Gastrocnemius medialis (tissue), 4 donors: ENCODE measurements at regions of chr13 and their contacts with region 1.

Region 1: GRCh38 chr13:48037346-48038173 is at the start of gene NUDT15:
- DNase-seq: peak; percentile 85 to 90
- ATAC-seq: peak; percentile 99
- H3K4me3 ChIP-seq: peak within 1 kb of the TSS; percentile 73 to 92 (median 86)
- H3K27ac ChIP-seq: peak within 1 kb of the TSS; percentile 93 to 99 (median 97)
- H3K4me1 ChIP-seq: peaks cover 6 to 16% of the 10 kb centered on the region in 2 donors
- H3K27me3 ChIP-seq: no peaks in the 10 kb centered on the region
- CTCF ChIP-seq: peak; percentile 96 to 98 (median 97)
- POLR2A ChIP-seq: peak; percentile 76 to 82
- total RNA-seq, gene NUDT15: 7.1 to 13.9 (median 10.7) TPM

Region 2: GRCh38 chr13:47673000-47673915 is 364.3 kb before region 1 on chr13:
- in situ Hi-C with region 1: no loop called
- intact Hi-C with region 1: no loop called
- DNase-seq: peak; percentile 2 to 31
- ATAC-seq: peak; percentile 90 to 94
- H3K4me3 ChIP-seq: no peak overlapping the region
- H3K27ac ChIP-seq: peak overlapping the region in 3 of 4 donors; percentile 41 to 77 (median 74)
- H3K4me1 ChIP-seq: peaks cover 21 to 24% of the 10 kb centered on the region in 2 donors
- H3K27me3 ChIP-seq: no peaks in the 10 kb centered on the region
- CTCF ChIP-seq: no peak
- POLR2A ChIP-seq: no peak

Region 3: DNA sequence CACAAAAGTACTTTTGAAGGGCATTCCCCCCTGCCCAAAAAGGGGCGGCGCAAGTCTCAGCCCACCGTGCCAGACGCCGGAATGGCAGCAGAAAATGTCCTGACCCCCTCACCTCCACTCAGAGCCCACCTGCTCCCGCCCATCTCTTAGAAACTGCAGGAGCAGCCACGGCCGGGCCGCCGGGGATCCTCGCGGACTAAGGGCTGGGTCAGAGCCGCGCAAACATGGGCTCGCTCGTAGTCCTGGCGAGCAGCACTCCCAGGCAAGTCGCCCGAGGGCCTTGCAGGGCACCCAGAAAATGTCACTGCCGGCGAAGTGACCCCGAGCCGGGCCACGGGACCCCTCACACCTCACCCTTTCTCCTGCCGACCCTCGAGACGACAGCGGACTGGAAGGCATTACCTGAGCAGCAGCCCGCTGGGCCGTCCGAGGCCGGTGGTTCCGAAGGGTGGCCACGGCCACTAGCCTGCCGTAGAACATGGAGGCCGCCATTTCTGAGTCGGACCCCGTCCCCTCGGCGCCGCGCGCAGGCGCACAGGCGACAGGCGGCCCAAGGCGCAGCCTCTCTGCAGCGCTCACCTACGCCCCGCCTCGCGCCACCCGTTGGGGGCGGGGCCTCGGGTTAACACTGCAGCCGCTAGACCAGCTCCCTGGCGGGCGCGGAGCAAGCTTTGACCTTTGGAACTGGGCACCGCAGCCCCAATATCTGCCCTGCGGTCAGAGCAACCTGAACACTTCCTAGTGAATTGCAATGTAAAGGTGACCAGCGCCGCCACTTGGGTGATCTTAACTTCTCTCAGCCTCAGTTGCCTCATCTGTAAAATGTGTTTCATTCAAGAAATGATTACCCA is 36.6 kb before region 1 on chr13 and contains the start of gene SUCLA2:
- in situ Hi-C with region 1: no loop called
- intact Hi-C with region 1: loop called (anchors 1 kb)
- DNase-seq: peak; percentile 68 to 84
- ATAC-seq: peak; percentile 91 to 93
- H3K4me3 ChIP-seq: peak within 1 kb of the TSS; percentile 86 to 100 (median 94)
- H3K27ac ChIP-seq: peak within 1 kb of the TSS; percentile 92 to 96 (median 94)
- H3K4me1 ChIP-seq: peaks cover 34 to 36% of the 10 kb centered on the region in 2 donors
- H3K27me3 ChIP-seq: no peaks in the 10 kb centered on the region
- CTCF ChIP-seq: peak in 2 of 5 experiments; percentile 13 to 22
- POLR2A ChIP-seq: peak; percentile 69 to 72
- total RNA-seq, gene SUCLA2: 82.2 to 142 (median 97.0) TPM

Region 4: DNA sequence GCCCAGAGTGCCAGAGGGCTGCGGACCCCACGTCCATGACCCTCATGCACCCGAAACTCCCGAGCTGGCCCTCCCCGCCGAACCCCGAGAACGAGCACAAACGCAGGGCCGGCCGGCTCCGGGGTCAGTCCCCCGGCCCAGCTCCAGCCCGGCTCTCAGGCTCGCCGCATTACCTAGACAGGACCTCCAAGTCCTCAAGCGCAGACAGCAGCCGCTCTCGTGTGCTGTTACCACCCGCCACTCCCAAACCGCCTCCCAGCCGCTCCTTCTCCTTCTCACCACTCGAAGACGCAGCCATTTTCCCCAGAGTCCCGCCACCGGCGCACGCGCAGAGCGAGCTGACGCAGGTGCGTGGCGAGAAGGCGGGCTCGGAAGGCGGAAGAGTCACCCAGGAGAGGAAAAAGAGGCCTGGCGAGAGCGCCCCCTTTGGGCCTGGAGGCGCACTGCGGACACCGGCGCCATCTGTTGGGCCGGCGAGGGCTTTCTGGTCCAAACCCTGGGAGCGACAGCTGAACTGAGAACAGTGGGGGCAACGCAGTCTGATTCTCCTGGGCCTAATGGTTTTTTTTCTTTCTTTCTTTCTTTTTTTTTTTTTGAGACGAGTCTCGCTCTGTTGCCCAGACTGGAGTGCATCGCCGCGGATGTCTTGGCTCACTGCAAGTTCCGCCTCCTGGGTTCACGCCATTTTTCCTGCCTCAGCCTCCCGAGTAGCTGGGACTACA is 57.4 kb after region 1 on chr13 and contains the start of gene MED4:
- in situ Hi-C with region 1: loop called in 1 of 4 experiments (anchors 10 kb)
- intact Hi-C with region 1: loop called (anchors 2 kb)
- DNase-seq: peak; percentile 85 to 92
- ATAC-seq: peak; percentile 97 to 98
- H3K4me3 ChIP-seq: peak within 1 kb of the TSS; percentile 85 to 99 (median 93)
- H3K27ac ChIP-seq: peak within 1 kb of the TSS; percentile 84 to 94 (median 91)
- H3K4me1 ChIP-seq: peaks cover 37 to 44% of the 10 kb centered on the region in 2 donors
- H3K27me3 ChIP-seq: no peaks in the 10 kb centered on the region
- CTCF ChIP-seq: peak; percentile 96 to 99 (median 98)
- POLR2A ChIP-seq: peak; percentile 85 to 86
- total RNA-seq, gene MED4: 30.7 to 37.5 (median 31.9) TPM

Region 5: DNA sequence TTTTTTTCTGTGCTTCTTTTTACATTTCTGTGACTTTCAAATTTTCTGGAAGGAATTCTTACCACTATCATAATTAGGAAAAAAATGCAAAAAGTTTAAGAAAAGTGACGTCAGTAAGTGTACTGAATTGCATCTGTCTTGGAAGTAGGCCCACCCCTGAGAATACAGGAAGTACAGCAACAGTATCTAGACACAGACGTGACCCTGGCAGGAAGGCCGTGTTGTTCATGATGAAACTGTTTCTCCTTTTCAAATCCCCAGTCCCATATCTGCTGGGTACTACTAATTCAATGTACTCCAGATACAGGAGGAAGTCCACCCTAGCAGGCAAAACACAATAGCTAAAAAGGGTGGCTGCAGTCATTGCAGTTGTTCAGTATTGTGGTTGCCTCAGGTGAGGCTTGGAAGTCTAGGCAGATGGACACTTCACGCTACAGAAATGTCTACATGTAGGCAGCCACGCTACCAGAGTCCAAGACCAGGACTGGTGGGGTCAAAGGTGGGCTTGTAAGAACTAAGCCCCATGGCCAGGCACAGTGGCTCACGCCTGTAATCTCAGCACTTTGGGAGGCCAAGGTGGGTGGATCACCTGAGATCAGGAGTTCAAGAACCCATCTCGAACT is 107.0 kb after region 1 on chr13:
- in situ Hi-C with region 1: no loop called
- intact Hi-C with region 1: no loop called
- DNase-seq: peak; percentile 19 to 29
- ATAC-seq: peak in 1 of 2 donors; percentile 36
- H3K4me3 ChIP-seq: no peak overlapping the region
- H3K27ac ChIP-seq: peak overlapping the region in 3 of 4 donors; percentile 14 to 46 (median 22)
- H3K4me1 ChIP-seq: peaks cover 0 to 3% of the 10 kb centered on the region in 2 donors
- H3K27me3 ChIP-seq: no peaks in the 10 kb centered on the region
- CTCF ChIP-seq: no peak
- POLR2A ChIP-seq: no peak